ENCODE measurements at regions of chr15 and their contacts with region 1.

Region 1: DNA sequence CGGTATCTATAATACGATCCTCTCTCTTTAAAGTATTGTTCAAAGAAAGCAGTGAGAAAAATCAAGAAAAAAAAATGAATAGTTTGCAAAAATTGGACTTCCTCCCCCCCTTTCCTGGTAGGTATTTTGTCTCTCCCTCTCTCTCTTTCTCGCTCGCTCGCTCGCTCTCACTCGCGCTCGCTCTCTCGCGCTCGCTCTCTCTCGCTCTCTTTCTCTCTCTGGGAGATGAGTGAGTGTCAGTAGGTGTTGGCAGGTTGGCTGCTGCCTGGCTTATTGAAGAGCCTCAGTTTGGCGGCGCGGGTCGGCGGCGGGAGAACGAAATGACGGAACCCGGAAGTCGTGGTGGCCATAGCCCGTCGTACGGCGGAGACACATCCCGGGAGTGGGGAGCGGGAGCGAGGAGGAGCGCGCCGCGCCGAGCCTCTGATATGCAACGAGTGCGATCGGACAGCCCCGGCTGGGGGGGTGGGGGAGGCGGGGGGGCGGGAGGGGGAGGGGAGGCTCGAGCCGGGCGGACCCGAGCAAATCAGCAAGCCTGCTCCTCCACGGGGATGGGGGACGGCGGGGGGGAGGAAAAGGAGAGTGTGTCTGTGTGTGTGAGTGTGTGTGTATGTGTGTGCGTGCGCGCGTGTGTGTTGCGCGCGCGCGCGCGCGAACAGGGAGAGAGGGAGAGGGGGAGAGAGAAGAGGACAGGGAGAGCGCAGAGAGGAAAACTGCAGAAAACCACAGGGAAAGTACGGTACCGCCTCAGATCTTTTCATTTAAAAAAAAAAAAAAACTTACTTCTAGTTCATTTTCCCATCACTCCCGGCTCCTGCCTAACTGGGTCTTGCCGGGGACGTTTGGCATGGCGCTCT is at the start of gene MEIS2:
- DNase-seq: peak; percentile 90
- H3K4me3 ChIP-seq: peak within 1 kb of the TSS; percentile 95
- H3K27ac ChIP-seq: peak within 1 kb of the TSS; percentile 96
- H3K27me3 ChIP-seq: no peaks in the 10 kb centered on the region
- CTCF ChIP-seq: no peak
- polyA plus RNA-seq, gene MEIS2: 31.7 and 33.4 TPM in 2 replicates

Region 2: GRCh38 chr15:36415643-36416042 is 684.7 kb before region 1 on chr15:
- CTCF ChIA-PET with region 1: interaction called, 12 read pairs
- POLR2A ChIA-PET with region 1: no interaction called
- DNase-seq: no peak
- H3K4me3 ChIP-seq: no peak overlapping the region
- H3K27ac ChIP-seq: no peak overlapping the region
- H3K27me3 ChIP-seq: no peaks in the 10 kb centered on the region
- CTCF ChIP-seq: no peak

Region 3: GRCh38 chr15:36936613-36937012 is 163.7 kb before region 1 on chr15:
- CTCF ChIA-PET with region 1: interaction called, 12 read pairs
- POLR2A ChIA-PET with region 1: no interaction called
- DNase-seq: no peak
- H3K4me3 ChIP-seq: no peak overlapping the region
- H3K27ac ChIP-seq: no peak overlapping the region
- H3K27me3 ChIP-seq: no peaks in the 10 kb centered on the region
- CTCF ChIP-seq: no peak